ENCODE measurements at regions of chr2 and their contacts with region 1.

Region 1: GRCh38 chr2:204871231-204871953 is 326.1 kb downstream of the PARD3B start:
- DNase-seq: no peak
- H3K4me3 Mint-ChIP-seq: no peak overlapping the region
- H3K27ac Mint-ChIP-seq: no peak overlapping the region
- H3K4me1 Mint-ChIP-seq: peaks cover 36% of the 10 kb centered on the region
- H3K27me3 Mint-ChIP-seq: peaks cover 17% of the 10 kb centered on the region

Region 2: DNA sequence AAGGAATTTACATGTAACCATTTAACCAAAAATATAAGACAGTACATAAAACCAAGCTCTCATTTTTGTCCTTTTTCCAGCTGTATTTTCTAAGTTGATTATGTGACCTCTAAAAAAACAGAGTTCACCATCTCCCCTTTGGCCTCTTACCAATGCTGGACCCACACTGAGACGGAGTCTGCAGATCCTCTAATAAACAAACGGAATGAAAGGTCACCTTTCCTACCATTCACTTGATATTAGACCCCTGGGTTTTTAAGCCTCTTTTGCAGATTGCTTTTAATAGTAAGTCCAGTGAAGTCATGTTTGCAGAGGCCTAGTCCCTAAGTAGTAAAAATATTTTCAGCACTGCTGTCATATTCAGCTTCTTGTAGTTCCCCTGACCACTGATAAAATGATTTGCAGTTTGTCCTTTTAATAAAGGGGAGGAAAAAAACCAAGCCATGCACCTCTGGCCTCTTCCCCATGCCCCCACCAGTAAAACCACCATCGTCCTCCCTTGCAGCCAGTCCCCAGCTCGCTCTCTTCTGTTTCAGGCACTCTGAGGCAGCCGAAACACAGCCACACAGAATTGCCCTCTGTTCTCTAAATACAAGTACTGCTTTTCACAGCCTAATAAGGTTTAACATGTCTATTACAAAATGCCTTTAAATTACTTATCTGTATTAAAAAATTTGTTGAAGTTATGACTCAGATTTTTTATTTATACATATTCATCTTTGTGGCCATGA is 101.4 kb after region 1 on chr2:
- intact Hi-C with region 1: loop called (anchors 1 kb)
- DNase-seq: no peak
- H3K4me3 Mint-ChIP-seq: no peak overlapping the region
- H3K27ac Mint-ChIP-seq: peak overlapping the region; percentile 49
- H3K4me1 Mint-ChIP-seq: peaks cover 38% of the 10 kb centered on the region
- H3K27me3 Mint-ChIP-seq: no peaks in the 10 kb centered on the region

Region 3: DNA sequence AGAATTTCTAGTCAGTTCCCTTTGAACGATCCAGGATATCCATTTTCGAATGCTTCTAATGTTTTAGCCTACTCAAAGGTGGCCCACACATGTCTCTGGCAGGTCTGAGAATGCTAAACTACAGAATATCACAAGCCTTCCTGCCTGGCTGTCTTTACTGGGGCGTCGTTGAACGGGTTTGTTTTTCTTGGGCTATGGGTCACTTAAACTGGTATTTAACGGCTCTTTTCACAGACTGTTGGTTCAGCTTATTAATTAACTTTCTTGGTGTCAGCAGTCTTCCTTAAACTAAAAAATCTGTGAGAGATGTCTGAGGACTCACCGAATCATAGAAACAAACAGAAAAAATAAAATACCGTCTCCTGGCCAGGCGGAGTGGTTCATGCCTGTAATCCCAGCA is 247.7 kb after region 1 on chr2:
- intact Hi-C with region 1: loop called (anchors 2 kb)
- DNase-seq: no peak
- H3K4me3 Mint-ChIP-seq: no peak overlapping the region
- H3K27ac Mint-ChIP-seq: no peak overlapping the region
- H3K4me1 Mint-ChIP-seq: peaks cover 5% of the 10 kb centered on the region
- H3K27me3 Mint-ChIP-seq: no peaks in the 10 kb centered on the region

Region 4: DNA sequence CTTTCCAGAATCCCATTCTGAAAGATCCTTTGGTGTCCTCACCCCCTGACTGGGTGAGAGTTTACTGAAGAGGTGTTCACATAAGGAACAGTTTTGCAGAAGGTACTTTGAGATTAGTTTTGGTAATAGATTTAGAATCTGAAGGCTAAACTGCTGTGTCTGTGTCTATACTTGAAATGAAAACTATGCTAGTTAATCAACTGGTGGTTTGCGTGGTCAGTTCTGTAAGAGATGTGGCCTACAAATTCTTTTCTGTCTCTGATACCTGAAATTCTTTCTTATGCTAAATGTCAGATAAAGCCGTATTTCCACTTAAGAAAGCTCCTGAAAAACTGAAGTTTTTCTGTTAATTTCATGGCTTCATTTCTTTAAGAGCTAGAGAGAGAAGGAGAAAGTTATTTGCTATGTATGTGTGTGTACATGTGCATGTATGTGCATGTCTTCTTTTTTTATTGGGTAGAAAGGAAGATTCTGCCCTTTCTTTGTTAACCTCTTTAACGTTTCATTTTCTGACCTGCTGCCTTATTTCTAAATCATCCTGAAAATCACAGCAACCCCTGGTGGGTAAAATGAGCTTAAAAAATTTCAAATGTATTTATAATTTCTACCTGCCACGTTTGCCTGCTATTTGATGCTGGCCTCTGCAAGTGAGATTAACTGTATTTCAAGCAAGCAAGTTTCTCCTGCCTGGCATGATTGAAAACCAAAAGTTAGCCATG is 258.9 kb after region 1 on chr2:
- intact Hi-C with region 1: loop called (anchors 2 kb)
- DNase-seq: no peak
- H3K4me3 Mint-ChIP-seq: no peak overlapping the region
- H3K27ac Mint-ChIP-seq: no peak overlapping the region
- H3K4me1 Mint-ChIP-seq: peaks cover 23% of the 10 kb centered on the region
- H3K27me3 Mint-ChIP-seq: no peaks in the 10 kb centered on the region

Measured in activated T-helper 1 cell treated with anti-CD3 and anti-CD28 coated beads, Interleukin-12 subunit alpha, Interleukin-12 subunit beta, Interleukin-2, Interleukin-4 antibody, amounts not matched to agents 30 ng/mL and 10 ng/mL and 1 ng/mL, durations not matched to agents 14 hours and 24 hours and 36 hours (primary cell).